Transverse colon (tissue), 4 donors: ENCODE measurements at regions of chrX and their contacts with region 1.

Region 1: DNA sequence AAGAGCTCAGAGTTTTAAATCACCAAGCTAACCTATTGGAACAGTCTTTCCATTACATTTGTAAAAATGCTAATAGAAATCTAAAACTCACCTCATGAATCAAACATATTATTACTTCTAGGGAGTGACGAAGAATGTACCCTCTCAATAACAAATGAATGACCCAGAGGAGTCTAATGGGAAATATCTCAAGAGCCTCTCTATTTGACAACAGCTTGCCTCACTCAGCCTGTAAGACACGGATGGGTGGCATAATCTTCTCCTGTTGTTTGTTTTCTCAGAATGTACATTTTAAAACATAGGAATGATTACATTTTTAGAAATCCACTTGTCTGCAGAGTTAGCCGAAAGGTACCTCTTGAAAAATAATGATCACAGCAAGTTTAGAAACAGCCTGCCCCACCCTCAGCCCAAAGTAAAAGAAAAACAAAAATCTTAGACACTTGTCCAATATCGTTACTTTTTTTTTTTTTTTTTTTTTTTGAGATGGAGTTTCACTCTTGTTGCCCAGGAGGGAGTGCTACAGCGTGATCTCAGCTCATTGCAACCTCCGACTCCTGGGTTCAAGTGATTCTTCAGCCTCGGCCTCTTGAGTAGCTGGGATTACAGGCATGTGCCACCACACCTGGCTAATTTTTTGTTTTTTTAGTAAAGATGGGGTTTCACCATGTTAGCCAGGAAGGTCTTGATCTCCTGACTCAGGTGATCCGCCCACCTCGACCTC is 183.6 kb upstream of the FTHL17 start:
- DNase-seq: no peak
- H3K4me3 ChIP-seq: no peak overlapping the region
- H3K27ac ChIP-seq: no peak overlapping the region
- H3K4me1 ChIP-seq: no peaks in the 10 kb centered on the region
- H3K27me3 ChIP-seq: no peaks in the 10 kb centered on the region
- CTCF ChIP-seq: no peak
- EP300 ChIP-seq: no peak
- POLR2A ChIP-seq: no peak

Region 2: DNA sequence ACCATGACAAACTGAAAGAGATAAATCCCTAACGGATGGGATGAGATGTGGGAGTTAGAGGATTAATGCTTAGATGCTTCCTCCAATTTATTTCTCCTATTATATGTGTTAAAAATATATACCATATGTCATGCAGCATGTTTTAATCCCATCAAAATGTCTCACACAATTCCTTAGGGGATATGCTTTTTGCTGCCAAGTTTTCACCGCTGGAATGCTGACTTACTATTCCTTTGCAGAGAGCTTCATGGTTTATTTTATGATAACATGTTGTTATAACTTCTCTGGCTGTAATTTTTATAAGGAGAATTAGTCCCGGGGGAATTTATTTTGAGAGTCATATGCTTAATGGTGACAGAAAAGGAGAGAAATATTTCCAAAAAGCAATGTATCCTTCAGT is 1998.0 kb before region 1 on chrX:
- in situ Hi-C with region 1: no loop called
- intact Hi-C with region 1: no loop called
- DNase-seq: no peak
- H3K4me3 ChIP-seq: no peak overlapping the region
- H3K27ac ChIP-seq: no peak overlapping the region
- H3K4me1 ChIP-seq: no peaks in the 10 kb centered on the region
- H3K27me3 ChIP-seq: no peaks in the 10 kb centered on the region
- CTCF ChIP-seq: no peak
- EP300 ChIP-seq: no peak
- POLR2A ChIP-seq: no peak

Region 3: DNA sequence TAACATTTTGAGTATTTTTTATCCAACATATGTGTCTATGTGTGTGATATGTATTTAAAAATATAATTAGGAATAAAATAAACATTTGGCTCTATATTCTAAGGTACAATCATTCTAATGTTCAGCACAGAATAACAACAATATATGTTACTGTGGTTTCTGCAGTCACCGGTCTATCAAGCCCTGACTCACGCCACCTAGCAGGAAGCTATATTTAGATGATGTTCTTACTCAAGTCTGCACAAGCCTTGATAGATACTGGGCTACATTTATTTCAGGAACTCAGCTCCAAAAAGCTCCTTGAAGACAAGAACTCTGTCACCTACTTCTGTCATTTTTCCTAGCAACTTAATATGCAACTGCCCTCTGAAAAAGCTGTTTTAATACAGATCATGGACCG is 31.7 kb before region 1 on chrX:
- in situ Hi-C with region 1: no loop called
- intact Hi-C with region 1: loop called (anchors 1 kb)
- DNase-seq: no peak
- H3K4me3 ChIP-seq: no peak overlapping the region
- H3K27ac ChIP-seq: no peak overlapping the region
- H3K4me1 ChIP-seq: no peaks in the 10 kb centered on the region
- H3K27me3 ChIP-seq: no peaks in the 10 kb centered on the region
- CTCF ChIP-seq: no peak
- EP300 ChIP-seq: no peak
- POLR2A ChIP-seq: no peak

Region 4: GRCh38 chrX:31433856-31434255 is 178.4 kb after region 1 on chrX:
- in situ Hi-C with region 1: no loop called
- intact Hi-C with region 1: no loop called
- DNase-seq: no peak
- H3K4me3 ChIP-seq: no peak overlapping the region
- H3K27ac ChIP-seq: no peak overlapping the region
- H3K4me1 ChIP-seq: peaks cover 0 to 7% (median 0%) of the 10 kb centered on the region in 4 donors
- H3K27me3 ChIP-seq: no peaks in the 10 kb centered on the region
- CTCF ChIP-seq: no peak
- EP300 ChIP-seq: no peak
- POLR2A ChIP-seq: no peak